B cell (primary cell): ENCODE measurements at regions of chr1 and their contacts with region 1.

Region 1: GRCh38 chr1:3423245-3423829 is 31.1 kb upstream of the ARHGEF16 start:
- DNase-seq: no peak
- ATAC-seq: no peak
- H3K4me3 ChIP-seq: no peak overlapping the region
- H3K4me3 Mint-ChIP-seq: no peak overlapping the region
- H3K27ac ChIP-seq: no peak overlapping the region
- H3K27ac Mint-ChIP-seq: no peak overlapping the region
- H3K4me1 ChIP-seq: peaks cover 0 to 6% of the 10 kb centered on the region in 2 donors
- H3K4me1 Mint-ChIP-seq: no peaks in the 10 kb centered on the region
- H3K27me3 ChIP-seq: peaks cover 0 to 3% (median 0%) of the 10 kb centered on the region in 4 experiments
- H3K27me3 Mint-ChIP-seq: peaks cover 15% of the 10 kb centered on the region
- CTCF ChIP-seq: no peak

Region 2: DNA sequence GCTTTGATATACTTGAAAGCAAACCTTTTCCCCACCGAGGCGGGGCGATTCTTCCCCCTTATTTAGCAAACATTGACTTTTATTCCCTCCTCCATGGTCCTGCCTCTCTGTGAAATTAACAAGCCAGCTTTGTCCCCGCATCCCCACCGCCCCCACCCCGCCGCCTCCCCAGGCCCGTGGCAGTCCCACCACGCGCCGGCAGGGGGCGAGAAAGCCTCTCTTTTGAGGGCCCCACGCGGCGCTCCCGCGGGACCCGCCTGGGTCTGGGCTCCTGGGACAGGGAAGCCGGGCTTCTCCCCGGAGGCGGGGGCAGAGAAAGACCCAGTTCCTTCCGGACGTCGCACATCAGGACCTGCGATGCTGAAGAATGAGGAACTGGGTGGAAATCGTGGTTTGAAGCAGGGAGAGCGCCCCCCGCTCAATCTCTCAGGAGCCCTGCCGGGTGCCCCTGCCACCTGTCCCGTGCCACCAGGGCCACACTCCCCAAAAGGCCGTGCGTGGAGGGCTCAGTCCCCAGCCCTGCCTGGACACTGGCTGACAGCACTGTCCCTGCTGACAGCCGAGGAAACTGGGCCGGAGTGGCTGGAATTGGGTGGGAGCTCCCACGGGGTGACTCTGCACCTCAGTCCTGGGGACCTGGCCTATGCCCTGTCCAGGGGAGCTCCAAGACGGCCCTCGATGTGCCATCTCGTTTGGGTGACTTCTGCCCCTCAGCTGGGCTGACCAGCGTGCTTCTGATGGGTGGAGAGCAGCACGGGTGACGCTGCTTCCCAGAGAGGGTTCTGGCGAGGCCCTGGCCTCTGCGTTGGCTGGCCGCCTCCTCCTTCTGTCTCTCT is 410.7 kb before region 1 on chr1:
- CTCF ChIA-PET with region 1: interaction called, 9 read pairs
- POLR2A ChIA-PET with region 1: no interaction called
- intact Hi-C with region 1: loop called (anchors 5 kb)
- DNase-seq: peak; percentile 44
- ATAC-seq: peak; percentile 43
- H3K4me3 ChIP-seq: no peak overlapping the region
- H3K4me3 Mint-ChIP-seq: no peak overlapping the region
- H3K27ac ChIP-seq: no peak overlapping the region
- H3K27ac Mint-ChIP-seq: no peak overlapping the region
- H3K4me1 ChIP-seq: peaks cover 0 to 7% of the 10 kb centered on the region in 2 donors
- H3K4me1 Mint-ChIP-seq: peaks cover 5% of the 10 kb centered on the region
- H3K27me3 ChIP-seq: peaks cover 0 to 9% (median 4%) of the 10 kb centered on the region in 4 experiments
- H3K27me3 Mint-ChIP-seq: peaks cover 12% of the 10 kb centered on the region
- CTCF ChIP-seq: peak; percentile 68

Region 3: GRCh38 chr1:3539707-3540425 is 116.5 kb after region 1 on chr1:
- CTCF ChIA-PET with region 1: no interaction called
- POLR2A ChIA-PET with region 1: no interaction called
- intact Hi-C with region 1: no loop called
- DNase-seq: no peak
- ATAC-seq: no peak
- H3K4me3 ChIP-seq: no peak overlapping the region
- H3K4me3 Mint-ChIP-seq: no peak overlapping the region
- H3K27ac ChIP-seq: no peak overlapping the region
- H3K27ac Mint-ChIP-seq: no peak overlapping the region
- H3K4me1 ChIP-seq: peaks cover 0 to 6% of the 10 kb centered on the region in 2 donors
- H3K4me1 Mint-ChIP-seq: peaks cover 2% of the 10 kb centered on the region
- H3K27me3 ChIP-seq: no peaks in the 10 kb centered on the region
- H3K27me3 Mint-ChIP-seq: no peaks in the 10 kb centered on the region
- CTCF ChIP-seq: no peak